Mammary epithelial cell (primary cell): ENCODE measurements at regions of chr22 and their contacts with region 1.

Region 1: DNA sequence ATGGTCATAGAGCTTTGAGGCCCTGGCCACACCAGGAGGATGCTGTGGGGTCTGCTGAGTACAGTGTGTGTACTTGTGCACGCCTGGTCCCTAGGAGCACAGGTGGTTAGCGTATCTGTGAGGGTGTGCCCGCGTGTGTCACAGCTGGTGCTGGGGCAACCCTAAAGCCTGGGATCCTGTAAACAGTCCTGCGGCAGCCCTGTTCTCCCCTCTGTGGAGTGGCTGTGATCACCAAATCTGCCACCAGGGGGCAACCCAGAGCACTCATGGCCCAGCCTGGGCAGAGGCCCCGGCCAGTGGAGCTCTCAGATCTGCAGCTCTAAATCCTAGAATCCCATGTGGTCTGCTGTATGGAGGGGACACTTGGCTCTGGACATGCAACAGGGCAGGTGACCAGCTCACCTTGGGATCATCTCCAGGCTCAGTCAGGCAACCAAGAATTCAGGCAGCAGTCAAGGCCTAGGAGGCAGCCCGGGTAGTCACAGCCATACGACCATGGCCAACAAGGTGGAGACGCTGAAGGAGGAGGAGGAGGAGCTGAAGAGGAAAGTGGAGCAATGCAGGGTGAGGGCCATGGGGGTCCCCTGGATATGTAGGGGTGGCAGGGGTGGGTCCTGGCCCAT is 3.9 kb downstream of the SH3BP1 start:
- DNase-seq: peak; percentile 62
- H3K4me3 ChIP-seq: no peak overlapping the region
- H3K27ac ChIP-seq: no peak overlapping the region
- H3K4me1 ChIP-seq: peaks cover 23% of the 10 kb centered on the region
- H3K27me3 ChIP-seq: no peaks in the 10 kb centered on the region
- CTCF ChIP-seq: peak; percentile 74 to 84

Region 2: GRCh38 chr22:37552524-37553163 is 90.7 kb before region 1 on chr22:
- CTCF ChIA-PET with region 1: no interaction called
- dilution Hi-C with region 1: no loop called
- in situ Hi-C with region 1: no loop called
- intact Hi-C with region 1: no loop called
- DNase-seq: no peak
- H3K4me3 ChIP-seq: no peak overlapping the region
- H3K27ac ChIP-seq: no peak overlapping the region
- H3K4me1 ChIP-seq: peaks cover 8% of the 10 kb centered on the region
- H3K27me3 ChIP-seq: no peaks in the 10 kb centered on the region
- CTCF ChIP-seq: no peak

Region 3: GRCh38 chr22:37601540-37602442 is 41.5 kb before region 1 on chr22:
- CTCF ChIA-PET with region 1: no interaction called
- dilution Hi-C with region 1: loop called (anchors 5 kb)
- in situ Hi-C with region 1: no loop called
- intact Hi-C with region 1: no loop called
- DNase-seq: peak; percentile 67
- H3K4me3 ChIP-seq: no peak overlapping the region
- H3K27ac ChIP-seq: no peak overlapping the region
- H3K4me1 ChIP-seq: peaks cover 1% of the 10 kb centered on the region
- H3K27me3 ChIP-seq: no peaks in the 10 kb centered on the region
- CTCF ChIP-seq: no peak

Region 4: DNA sequence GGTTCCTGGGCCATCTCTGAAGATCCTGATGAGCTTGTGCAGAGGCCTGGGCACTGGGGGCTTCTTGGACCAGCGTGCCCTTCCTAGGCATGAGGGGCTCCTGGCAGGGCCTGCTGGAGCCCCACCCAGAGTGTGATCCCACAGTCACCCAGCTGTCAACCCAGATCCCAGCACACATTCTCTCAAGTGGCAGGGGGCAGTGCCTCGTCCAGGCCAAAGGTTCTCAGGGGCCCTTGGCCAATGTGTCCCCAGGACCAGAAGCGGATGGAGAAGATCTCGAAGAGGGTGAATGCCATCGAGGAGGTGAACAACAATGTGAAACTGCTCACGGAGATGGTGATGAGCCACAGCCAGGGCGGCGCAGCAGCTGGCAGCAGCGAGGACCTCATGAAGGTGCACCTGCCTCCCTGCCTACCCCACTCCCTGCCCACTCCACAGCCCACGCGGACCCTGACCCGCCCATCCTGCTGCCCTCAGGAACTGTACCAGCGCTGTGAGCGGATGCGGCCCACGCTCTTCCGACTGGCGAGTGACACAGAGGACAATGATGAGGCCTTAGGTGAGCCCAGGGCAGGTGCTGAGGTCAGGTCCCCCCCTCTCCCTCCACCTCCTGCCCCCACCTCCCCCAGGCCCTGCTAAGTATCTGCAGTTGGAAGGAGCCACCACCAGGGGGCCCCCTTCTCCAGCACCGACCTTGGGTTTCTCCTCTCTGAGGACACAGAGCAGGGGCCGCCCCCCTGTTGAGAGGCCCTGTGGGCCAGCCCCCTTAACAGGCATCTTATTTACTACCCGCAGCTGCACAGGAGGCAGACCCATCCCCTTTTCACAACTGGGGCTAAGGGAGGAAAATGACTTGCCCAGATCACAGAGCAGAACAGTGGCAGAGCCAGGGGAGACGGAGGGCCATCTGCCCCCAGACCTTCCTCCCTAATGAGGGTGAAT is 20.0 kb before region 1 on chr22:
- CTCF ChIA-PET with region 1: no interaction called
- dilution Hi-C with region 1: no loop called
- in situ Hi-C with region 1: no loop called
- intact Hi-C with region 1: loop called (anchors 2 kb)
- DNase-seq: no peak
- H3K4me3 ChIP-seq: no peak overlapping the region
- H3K27ac ChIP-seq: no peak overlapping the region
- H3K4me1 ChIP-seq: no peaks in the 10 kb centered on the region
- H3K27me3 ChIP-seq: no peaks in the 10 kb centered on the region
- CTCF ChIP-seq: peak; percentile 53 to 78

Region 5: DNA sequence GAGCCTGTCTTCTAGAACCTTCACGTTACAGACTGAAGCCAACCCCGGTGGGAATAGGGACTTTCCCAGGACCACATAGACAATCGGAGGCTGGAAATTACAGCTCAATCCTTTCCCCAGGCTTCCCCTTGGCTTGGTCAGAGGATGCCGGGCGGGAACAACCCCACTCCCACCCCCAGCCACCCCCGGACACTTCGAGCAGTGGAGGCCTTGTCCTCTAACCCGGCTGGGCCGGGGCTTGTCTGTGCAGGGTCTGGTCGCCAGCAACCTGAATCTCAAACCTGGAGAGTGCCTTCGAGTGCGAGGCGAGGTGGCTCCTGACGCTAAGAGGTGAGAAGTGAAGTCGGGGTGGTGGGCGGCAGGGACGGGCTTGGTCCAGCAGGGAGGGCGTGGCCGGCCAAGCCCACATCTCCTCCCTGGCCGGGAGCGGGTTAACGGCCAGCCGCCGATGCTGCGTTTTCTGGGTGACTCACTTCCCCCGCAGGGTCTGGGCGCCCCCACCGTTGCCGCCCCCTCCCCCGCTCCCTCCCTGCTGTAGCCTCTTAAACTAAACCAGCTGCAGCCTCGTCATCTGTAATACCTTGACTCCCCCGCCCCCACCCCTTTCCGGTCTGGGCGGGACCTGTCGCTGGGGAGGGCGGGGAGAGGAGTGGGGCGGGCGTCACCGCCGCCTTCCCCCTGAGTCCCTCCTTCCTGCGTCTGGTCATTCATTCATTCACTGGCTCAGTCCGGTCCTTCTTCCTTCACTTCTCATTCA is 33.6 kb after region 1 on chr22:
- CTCF ChIA-PET with region 1: interaction called, 10 read pairs
- dilution Hi-C with region 1: no loop called
- in situ Hi-C with region 1: loop called in 1 of 2 experiments (anchors 5 kb)
- intact Hi-C with region 1: loop called (anchors 1 kb)
- DNase-seq: peak; percentile 96
- H3K4me3 ChIP-seq: peak overlapping the region; percentile 67 to 76 (median 72)
- H3K27ac ChIP-seq: peak overlapping the region; percentile 78
- H3K4me1 ChIP-seq: peaks cover 33% of the 10 kb centered on the region
- H3K27me3 ChIP-seq: no peaks in the 10 kb centered on the region
- CTCF ChIP-seq: no peak

Region 6: GRCh38 chr22:37726241-37726887 is 83.0 kb after region 1 on chr22:
- CTCF ChIA-PET with region 1: no interaction called
- dilution Hi-C with region 1: no loop called
- in situ Hi-C with region 1: no loop called
- intact Hi-C with region 1: loop called (anchors 1 kb)
- DNase-seq: peak; percentile 19
- H3K4me3 ChIP-seq: no peak overlapping the region
- H3K27ac ChIP-seq: no peak overlapping the region
- H3K4me1 ChIP-seq: no peaks in the 10 kb centered on the region
- H3K27me3 ChIP-seq: no peaks in the 10 kb centered on the region
- CTCF ChIP-seq: peak in 1 of 2 donors; percentile 12

Region 7: DNA sequence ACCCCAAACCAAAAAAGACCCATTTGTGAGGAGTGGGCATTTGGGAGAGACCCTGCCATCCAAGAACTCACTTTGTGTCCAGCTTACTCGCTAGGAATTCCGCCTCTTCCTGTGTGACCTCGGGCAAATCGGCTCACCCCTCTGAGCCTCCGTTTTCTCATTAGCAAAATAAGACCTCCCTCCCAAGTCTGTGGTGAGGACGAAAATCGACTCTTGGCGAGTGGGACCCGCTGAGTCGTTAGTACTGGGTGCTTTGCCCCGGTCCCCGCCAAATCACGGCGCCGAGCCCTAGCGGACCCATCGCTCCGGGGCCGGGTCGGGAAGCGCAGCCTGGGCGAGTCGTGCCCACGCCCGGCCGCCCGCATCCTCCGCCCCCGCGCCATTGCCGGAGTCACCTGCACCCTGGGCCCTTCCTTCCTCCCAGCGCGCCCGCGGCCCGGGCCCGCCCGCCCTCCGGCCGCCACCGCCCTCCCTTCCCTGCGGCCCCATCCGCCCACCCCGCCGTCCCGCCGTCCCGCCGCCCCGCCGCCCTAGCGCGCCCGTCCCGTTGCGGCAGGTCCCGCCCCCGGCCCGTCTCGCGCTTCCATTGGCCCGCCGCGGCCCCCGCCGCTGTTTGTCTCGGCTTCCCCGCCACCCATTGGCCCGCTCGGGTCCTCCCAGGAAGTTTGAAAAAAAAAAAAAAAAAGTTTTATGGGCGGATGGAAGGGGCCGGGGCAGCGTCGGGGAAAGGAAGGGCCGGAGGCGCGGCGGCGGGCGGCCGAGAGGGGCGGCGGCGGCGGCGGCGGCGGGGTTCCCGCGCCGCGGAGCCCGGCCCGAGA is 102.4 kb after region 1 on chr22:
- CTCF ChIA-PET with region 1: no interaction called
- dilution Hi-C with region 1: loop called (anchors 5 kb)
- in situ Hi-C with region 1: no loop called
- intact Hi-C with region 1: no loop called
- DNase-seq: peak; percentile 85
- H3K4me3 ChIP-seq: peak overlapping the region; percentile 73 to 94 (median 75)
- H3K27ac ChIP-seq: peak overlapping the region; percentile 72
- H3K4me1 ChIP-seq: peaks cover 74% of the 10 kb centered on the region
- H3K27me3 ChIP-seq: no peaks in the 10 kb centered on the region
- CTCF ChIP-seq: no peak

Region 8: DNA sequence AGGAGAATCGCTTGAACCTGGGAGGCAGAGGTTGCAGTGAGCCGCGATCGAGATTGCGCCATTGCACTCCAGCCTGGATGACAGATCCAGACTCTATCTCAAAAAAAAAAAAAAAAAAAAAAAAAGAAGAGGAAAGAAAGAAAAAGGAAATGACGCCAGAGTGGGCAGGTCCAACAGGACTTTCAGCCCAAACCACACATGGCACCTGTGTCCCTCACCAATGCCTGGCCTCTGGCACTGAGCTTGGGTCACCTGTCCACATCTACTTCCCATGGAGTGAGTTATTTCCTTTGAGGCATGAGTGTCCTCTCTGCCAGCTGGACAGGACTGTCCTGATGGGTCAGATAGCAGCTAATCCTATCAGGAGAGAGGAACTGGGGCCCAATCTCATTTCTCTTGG is 149.2 kb after region 1 on chr22:
- CTCF ChIA-PET with region 1: interaction called, 3 read pairs
- dilution Hi-C with region 1: no loop called
- in situ Hi-C with region 1: loop called in 1 of 2 experiments (anchors 10 kb)
- intact Hi-C with region 1: loop called (anchors 1 kb)
- DNase-seq: no peak
- H3K4me3 ChIP-seq: no peak overlapping the region
- H3K27ac ChIP-seq: no peak overlapping the region
- H3K4me1 ChIP-seq: no peaks in the 10 kb centered on the region
- H3K27me3 ChIP-seq: no peaks in the 10 kb centered on the region
- CTCF ChIP-seq: no peak